Adrenal gland (tissue), 19 donors: ENCODE measurements at regions of chr2 and their contacts with region 1.

Region 1: DNA sequence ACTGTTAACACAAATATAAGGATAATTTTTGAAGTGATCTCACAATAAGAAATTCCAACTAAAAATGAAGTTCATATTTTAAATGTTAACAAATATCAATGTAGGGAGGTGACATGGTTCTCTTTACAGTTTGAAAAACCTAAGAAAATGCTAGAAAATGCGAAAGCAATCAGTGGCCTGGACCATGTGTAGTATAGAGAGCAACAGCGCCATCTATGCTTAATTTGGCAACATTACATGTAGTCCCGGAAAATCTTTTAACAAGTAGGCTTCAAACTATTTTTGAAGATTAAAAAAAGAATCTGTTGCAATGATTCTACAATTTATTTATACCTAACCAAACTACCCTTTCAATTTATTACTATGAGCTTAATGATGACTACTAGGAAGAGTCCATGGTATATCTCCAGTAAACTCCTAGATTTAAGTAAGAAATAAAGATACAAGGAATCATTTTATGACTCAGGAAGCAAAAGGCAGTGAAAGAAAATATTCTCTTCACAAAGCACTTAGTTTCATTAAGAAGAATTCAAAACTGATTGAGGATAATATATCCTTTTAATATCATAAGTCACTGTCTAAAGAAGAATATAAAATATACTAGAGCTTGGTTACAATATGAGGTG is 33.3 kb downstream of the NDUFA10 start:
- DNase-seq: peak in 1 of 7 donors; percentile 51
- H3K4me3 ChIP-seq: no peak overlapping the region
- H3K27ac ChIP-seq: no peak overlapping the region
- H3K4me1 ChIP-seq: no peaks in the 10 kb centered on the region
- H3K27me3 ChIP-seq: no peaks in the 10 kb centered on the region
- CTCF ChIP-seq: peak; percentile 74 to 92 (median 84)
- POLR2A ChIP-seq: no peak

Region 2: GRCh38 chr2:239143858-239144718 is 847.7 kb before region 1 on chr2:
- intact Hi-C with region 1: no loop called
- DNase-seq: peak in 5 of 7 donors; percentile 35 to 57 (median 42)
- H3K4me3 ChIP-seq: no peak overlapping the region
- H3K27ac ChIP-seq: no peak overlapping the region
- H3K4me1 ChIP-seq: no peaks in the 10 kb centered on the region
- H3K27me3 ChIP-seq: no peaks in the 10 kb centered on the region
- CTCF ChIP-seq: peak; percentile 31 to 75 (median 62)
- POLR2A ChIP-seq: no peak

Region 3: DNA sequence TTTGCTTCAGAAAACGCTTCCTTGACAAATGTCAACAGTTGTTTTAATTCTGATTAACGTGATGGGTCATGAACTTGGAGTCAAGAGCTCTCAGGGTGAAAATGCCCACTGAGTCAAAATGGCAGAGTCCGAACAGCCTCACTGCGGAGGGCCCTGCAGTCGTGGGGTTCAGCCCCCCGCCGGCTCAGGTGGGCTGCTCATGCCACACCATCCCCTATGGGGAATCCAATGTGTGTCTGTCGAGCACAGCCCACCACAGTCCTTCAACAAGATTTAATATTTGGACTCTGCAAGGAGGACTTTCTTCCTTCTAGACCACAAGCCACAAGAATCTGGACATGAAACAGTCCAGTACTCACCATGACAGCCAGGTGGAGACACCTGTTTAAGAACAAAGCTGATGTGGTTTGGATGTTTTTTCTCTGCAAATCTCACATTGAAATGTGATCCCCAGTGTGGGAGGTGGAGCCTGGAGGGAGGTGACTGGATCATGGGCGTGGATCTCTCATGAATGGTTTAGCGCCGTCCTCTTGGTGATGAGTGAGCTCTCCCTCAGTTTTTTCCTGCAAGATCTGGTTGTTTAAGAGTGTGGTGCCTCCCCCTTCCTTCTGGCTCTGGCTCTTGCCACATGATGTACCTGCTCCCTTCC is 167.6 kb before region 1 on chr2:
- intact Hi-C with region 1: loop called in 1 of 2 experiments (anchors 10 kb)
- DNase-seq: peak in 4 of 7 donors; percentile 11 to 57 (median 26)
- H3K4me3 ChIP-seq: no peak overlapping the region
- H3K27ac ChIP-seq: no peak overlapping the region
- H3K4me1 ChIP-seq: no peaks in the 10 kb centered on the region
- H3K27me3 ChIP-seq: no peaks in the 10 kb centered on the region
- CTCF ChIP-seq: peak in 3 of 6 experiments; percentile 23 to 32 (median 28)
- POLR2A ChIP-seq: no peak

Region 4: DNA sequence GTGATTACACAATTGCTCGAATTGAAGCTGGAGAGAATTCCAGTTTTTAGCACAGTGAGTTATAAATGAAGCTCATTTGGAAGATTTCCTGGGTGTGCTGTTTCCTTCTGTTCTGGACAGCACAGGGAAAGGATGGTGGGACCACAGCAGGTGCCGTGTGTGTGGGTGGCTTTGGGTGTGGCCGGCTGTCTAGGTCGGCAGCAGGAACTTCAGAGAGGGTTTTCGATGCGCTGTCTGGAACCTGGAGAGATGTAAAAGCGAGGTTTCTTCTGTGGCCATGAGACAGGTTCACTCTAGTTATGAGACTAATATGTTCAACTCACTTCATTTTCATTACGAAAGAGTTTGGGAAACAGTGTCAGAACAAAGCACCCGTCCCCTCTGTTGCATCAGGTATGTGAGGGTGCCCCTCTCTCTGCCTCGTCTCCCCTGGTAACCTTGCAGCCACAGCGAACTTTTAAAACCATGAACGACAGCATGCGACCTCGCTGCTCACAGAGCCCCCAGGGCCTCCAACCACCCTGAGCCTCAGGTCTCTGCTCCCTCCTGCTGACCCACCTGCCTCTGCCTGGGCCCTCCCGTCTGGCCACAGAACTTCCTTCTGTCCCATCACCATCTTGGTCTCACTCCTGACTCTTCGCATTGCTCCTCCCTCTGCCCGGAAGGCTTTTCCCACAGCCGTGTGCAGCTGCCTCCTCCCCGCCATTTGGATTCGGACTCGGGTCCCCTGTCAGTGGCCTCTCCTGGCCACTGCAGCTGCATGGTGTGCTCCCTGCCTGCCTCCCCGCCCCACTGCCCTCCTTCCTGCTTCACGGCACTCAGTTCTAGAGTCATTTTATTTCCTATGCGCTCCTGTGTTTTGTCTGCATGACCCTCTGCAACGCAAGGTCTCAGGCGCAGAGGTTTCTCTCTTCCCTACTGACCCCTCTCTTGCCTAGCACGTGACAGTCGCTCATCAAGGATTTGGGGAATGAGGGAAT is 117.9 kb before region 1 on chr2:
- intact Hi-C with region 1: no loop called
- DNase-seq: peak in 1 of 7 donors; percentile 21
- H3K4me3 ChIP-seq: no peak overlapping the region
- H3K27ac ChIP-seq: no peak overlapping the region
- H3K4me1 ChIP-seq: no peaks in the 10 kb centered on the region
- H3K27me3 ChIP-seq: no peaks in the 10 kb centered on the region
- CTCF ChIP-seq: no peak
- POLR2A ChIP-seq: no peak

Region 5: DNA sequence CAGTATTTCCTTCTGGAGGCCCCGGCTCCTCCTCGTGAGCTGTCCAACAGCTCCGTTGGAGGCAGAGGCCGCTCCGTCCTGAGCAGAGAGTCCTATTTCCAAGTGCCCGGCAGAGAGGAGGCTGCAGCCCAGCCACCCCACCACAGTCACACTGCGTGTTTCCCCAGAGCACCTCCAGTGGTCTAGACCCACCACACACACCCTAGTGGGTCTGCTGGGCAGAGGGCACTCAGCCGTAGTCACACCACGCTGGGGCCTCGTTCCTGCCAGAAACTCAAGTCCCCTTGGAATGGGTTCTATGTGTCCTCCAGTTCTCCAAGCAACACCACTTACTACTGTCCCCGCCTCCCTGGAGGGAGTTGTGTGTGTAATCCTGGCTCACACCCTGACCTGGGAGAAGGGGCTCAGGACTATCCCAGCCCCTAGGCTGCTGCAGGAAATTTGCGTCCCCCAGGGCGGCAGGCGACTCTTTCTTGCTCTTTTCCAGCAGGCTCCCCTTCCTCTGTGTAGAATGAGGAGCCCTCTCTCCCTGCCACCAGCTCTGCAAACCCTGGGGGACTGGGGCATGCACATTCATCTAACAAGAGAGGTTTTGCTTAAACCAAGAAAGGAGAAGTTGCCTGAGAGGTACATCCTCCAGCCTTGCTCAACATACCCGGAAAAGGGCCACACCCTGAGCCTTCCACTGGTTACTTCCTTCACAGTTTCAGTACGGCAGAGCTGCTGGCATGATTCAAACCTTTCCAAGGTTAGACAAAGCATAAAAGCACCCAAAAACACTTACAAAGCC is 80.8 kb before region 1 on chr2:
- intact Hi-C with region 1: no loop called
- DNase-seq: peak in 5 of 7 donors; percentile 27 to 69 (median 46)
- H3K4me3 ChIP-seq: no peak overlapping the region
- H3K27ac ChIP-seq: peak overlapping the region in 3 of 5 donors; percentile 26 to 58 (median 31)
- H3K4me1 ChIP-seq: no peaks in the 10 kb centered on the region
- H3K27me3 ChIP-seq: no peaks in the 10 kb centered on the region
- CTCF ChIP-seq: no peak
- POLR2A ChIP-seq: no peak

Region 6: DNA sequence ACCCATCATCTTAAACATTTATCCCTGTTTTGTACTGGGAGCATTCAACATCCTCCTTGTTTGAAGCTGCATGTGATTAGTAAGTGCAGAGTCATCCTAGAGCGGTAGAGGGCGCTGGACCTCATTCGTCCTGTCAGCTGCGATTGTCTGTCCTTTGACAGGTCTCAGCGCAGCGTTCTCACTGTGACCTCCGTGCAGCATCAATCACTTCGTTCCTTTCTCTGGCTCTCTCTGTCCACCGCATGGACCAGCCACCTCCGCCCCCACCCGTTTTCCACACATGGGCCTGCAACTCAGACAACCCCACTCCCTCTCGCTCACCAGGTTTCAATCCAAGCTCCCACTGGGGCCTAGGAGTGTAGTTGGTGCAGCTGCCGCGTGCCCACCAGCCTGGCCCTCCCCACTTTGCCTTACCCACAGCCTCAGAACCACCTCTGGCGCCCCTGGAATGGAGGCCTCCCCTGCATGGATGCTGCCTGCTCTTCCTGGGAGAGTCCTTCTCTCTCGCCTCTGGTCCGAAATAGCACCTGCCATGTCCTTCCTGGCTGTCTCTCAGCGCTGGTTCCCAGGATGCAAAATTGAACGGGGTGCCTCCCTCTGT is 57.1 kb before region 1 on chr2:
- intact Hi-C with region 1: loop called in 1 of 2 experiments (anchors 5 kb)
- DNase-seq: peak; percentile 63 to 93 (median 78)
- H3K4me3 ChIP-seq: no peak overlapping the region
- H3K27ac ChIP-seq: no peak overlapping the region
- H3K4me1 ChIP-seq: no peaks in the 10 kb centered on the region
- H3K27me3 ChIP-seq: no peaks in the 10 kb centered on the region
- CTCF ChIP-seq: peak; percentile 68 to 78 (median 75)
- POLR2A ChIP-seq: no peak